Activated naive CD4-positive, alpha-beta T cell treated with anti-CD3 and anti-CD28 coated beads for 36 hours (primary cell): ENCODE measurements at regions of chr18 and their contacts with region 1.

Region 1: DNA sequence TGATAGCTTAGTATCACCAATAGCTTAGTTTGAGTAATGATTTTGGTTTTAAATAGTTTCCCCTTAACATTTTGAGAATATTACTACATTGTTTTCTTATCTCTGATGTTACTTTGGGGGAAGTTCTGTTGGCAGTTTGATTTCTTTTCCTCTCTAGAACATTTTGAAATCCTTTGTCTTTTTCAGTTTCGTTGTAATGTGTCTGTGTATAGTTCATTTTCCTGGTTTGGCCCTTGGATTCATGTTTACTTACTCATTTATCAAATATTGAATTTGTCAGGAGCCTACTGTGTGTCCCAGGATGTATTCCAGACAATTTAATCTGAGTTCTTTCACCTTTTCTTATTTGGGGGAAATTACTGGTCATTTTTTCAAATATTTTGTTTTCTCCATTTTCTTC is 16.7 kb downstream of the ANKRD12 start:
- DNase-seq: no peak
- H3K4me3 Mint-ChIP-seq: no peak overlapping the region
- H3K27ac Mint-ChIP-seq: no peak overlapping the region
- H3K4me1 Mint-ChIP-seq: peaks cover 78% of the 10 kb centered on the region
- H3K27me3 Mint-ChIP-seq: no peaks in the 10 kb centered on the region

Region 2: GRCh38 chr18:9173770-9174233 is 20.5 kb after region 1 on chr18:
- CTCF ChIA-PET with region 1: no interaction called
- intact Hi-C with region 1: loop called (anchors 2 kb)
- DNase-seq: peak; percentile 21
- H3K4me3 Mint-ChIP-seq: no peak overlapping the region
- H3K27ac Mint-ChIP-seq: no peak overlapping the region
- H3K4me1 Mint-ChIP-seq: peaks cover 77% of the 10 kb centered on the region
- H3K27me3 Mint-ChIP-seq: no peaks in the 10 kb centered on the region